ENCODE measurements at regions of chr19 and their contacts with region 1.

Region 1: GRCh38 chr19:16714702-16715287 is 4.9 kb upstream of the NWD1 start:
- DNase-seq: peak; percentile 34 to 48 (median 38)
- H3K4me3 ChIP-seq: no peak overlapping the region
- H3K4me3 Mint-ChIP-seq: peak overlapping the region in 1 of 2 donors; percentile 47
- H3K27ac ChIP-seq: no peak overlapping the region
- H3K27ac Mint-ChIP-seq: peak overlapping the region in 2 of 7 donors; percentile 37 to 81
- H3K4me1 ChIP-seq: peaks cover 0 to 2% of the 10 kb centered on the region in 2 donors
- H3K4me1 Mint-ChIP-seq: peaks cover 6% of the 10 kb centered on the region
- H3K27me3 ChIP-seq: no peaks in the 10 kb centered on the region
- H3K27me3 Mint-ChIP-seq: peaks cover 11 to 17% (median 11%) of the 10 kb centered on the region in 3 donors
- CTCF ChIP-seq: peak; percentile 95

Region 2: GRCh38 chr19:16801596-16801995 is 86.8 kb after region 1 on chr19:
- intact Hi-C with region 1: no loop called
- DNase-seq: peak; percentile 30 to 63 (median 51)
- H3K4me3 ChIP-seq: no peak overlapping the region
- H3K4me3 Mint-ChIP-seq: peak overlapping the region in 1 of 2 donors; percentile 20
- H3K27ac ChIP-seq: peak overlapping the region; percentile 43 to 73
- H3K27ac Mint-ChIP-seq: peak overlapping the region; percentile 69 to 92 (median 87)
- H3K4me1 ChIP-seq: peaks cover 58 to 81% of the 10 kb centered on the region in 2 donors
- H3K4me1 Mint-ChIP-seq: peaks cover 58% of the 10 kb centered on the region
- H3K27me3 ChIP-seq: no peaks in the 10 kb centered on the region
- H3K27me3 Mint-ChIP-seq: peaks cover 0 to 7% (median 1%) of the 10 kb centered on the region in 3 donors
- CTCF ChIP-seq: peak; percentile 21

Region 3: GRCh38 chr19:17052439-17053210 is 337.8 kb after region 1 on chr19:
- intact Hi-C with region 1: loop called in 1 of 2 experiments (anchors 10 kb)
- DNase-seq: peak; percentile 28 to 52 (median 47)
- H3K4me3 ChIP-seq: no peak overlapping the region
- H3K4me3 Mint-ChIP-seq: no peak overlapping the region
- H3K27ac ChIP-seq: no peak overlapping the region
- H3K27ac Mint-ChIP-seq: peak overlapping the region in 1 of 7 donors; percentile 7
- H3K4me1 ChIP-seq: no peaks in the 10 kb centered on the region
- H3K4me1 Mint-ChIP-seq: no peaks in the 10 kb centered on the region
- H3K27me3 ChIP-seq: no peaks in the 10 kb centered on the region
- H3K27me3 Mint-ChIP-seq: peaks cover 0 to 5% (median 0%) of the 10 kb centered on the region in 3 donors
- CTCF ChIP-seq: peak; percentile 69